ENCODE measurements at regions of chr22 and their contacts with region 1.

Region 1: GRCh38 chr22:36286471-36287224 is 33.7 kb downstream of the APOL1 start:
- DNase-seq: peak; percentile 44 to 93
- H3K4me3 ChIP-seq: no peak overlapping the region
- H3K27ac ChIP-seq: peak overlapping the region; percentile 49; the same call in 1 of the 2 replicates
- H3K4me1 ChIP-seq: peaks cover 0 to 3% (median 0%) of the 10 kb centered on the region in 4 experiments; a peak in 3 of 7 replicates
- H3K27me3 ChIP-seq: no peaks in the 10 kb centered on the region
- CTCF ChIP-seq: peak; percentile 90 to 99 (median 98)
- EP300 ChIP-seq: 0 out of 3 replicates have a peak, but pooled peaks of 1 of the 2 experiments have one; percentile 32
- POLR2A ChIP-seq: 0 out of 3 replicates have a peak, but pooled peaks of 1 of the 2 experiments have one; percentile 18
- RAD21 ChIP-seq: peak; percentile 80 to 87

Region 2: GRCh38 chr22:36258701-36259614 is 27.7 kb before region 1 on chr22:
- CTCF ChIA-PET with region 1: interaction called, 21 read pairs
- POLR2A ChIA-PET with region 1: no interaction called
- DNase-seq: peak in 1 of 2 experiments; percentile 56
- H3K4me3 ChIP-seq: peak overlapping the region in 1 of 4 experiments; percentile 31; a peak in 1 of 8 replicates
- H3K27ac ChIP-seq: peak overlapping the region; percentile 47; the same call in 1 of the 2 replicates
- H3K4me1 ChIP-seq: peaks cover 7 to 14% (median 10%) of the 10 kb centered on the region in 4 experiments
- H3K27me3 ChIP-seq: no peaks in the 10 kb centered on the region
- CTCF ChIP-seq: no peak
- EP300 ChIP-seq: no peak
- POLR2A ChIP-seq: peak in 1 of 2 experiments; percentile 27; a peak in 1 of 3 replicates
- RAD21 ChIP-seq: no peak

Region 3: DNA sequence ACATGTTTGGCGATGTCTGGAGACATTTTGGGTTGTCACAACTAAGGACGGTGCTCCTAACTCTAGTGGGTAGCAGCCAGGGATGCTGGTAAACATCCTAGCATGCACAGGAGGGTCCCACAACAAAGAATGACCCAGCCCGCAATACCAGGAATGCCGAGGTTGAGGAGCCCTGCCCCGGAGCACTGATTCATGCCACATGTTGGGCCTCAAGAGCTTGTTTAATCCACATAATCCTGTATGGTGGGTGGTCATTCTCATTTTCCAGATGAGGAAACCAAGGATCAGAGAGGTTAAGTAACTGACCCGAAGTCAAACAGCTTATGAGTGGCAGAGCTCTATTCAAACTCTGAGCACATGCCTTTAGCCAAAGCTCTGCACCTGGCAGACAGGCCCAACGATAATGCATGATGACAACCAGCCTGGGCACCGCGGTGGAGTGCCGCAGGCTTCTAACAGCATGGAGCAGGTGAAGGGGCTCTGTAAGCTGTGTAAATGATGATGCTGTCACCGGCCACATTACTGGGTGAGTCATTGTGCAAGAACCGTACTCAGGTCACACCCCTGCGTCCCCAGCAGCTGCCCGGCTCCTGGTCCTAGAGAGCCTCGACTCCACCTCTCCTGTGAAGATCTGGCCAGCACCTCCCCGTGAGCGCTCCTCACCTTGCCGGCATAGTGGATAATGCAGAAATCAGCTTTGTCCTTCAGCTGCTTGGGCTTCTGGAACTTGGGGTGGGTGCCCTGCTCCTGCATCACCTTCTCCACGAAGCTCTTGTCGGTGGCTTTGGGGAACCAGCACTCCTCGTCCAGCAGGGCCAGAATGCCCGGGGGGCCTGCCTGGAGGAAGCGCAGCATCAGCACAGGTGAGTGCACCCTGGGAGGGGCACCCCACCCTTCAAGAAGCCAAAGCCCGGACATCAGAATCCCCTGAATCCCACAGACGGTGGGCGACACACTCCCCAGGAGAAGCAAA is 25.0 kb after region 1 on chr22:
- CTCF ChIA-PET with region 1: interaction called, 159 read pairs
- POLR2A ChIA-PET with region 1: interaction called, 4 read pairs
- DNase-seq: no peak
- H3K4me3 ChIP-seq: no peak overlapping the region
- H3K27ac ChIP-seq: no peak overlapping the region
- H3K4me1 ChIP-seq: no peaks in the 10 kb centered on the region
- H3K27me3 ChIP-seq: no peaks in the 10 kb centered on the region
- CTCF ChIP-seq: no peak
- EP300 ChIP-seq: no peak
- POLR2A ChIP-seq: no peak
- RAD21 ChIP-seq: no peak

Region 4: GRCh38 chr22:36365020-36365411 is 78.4 kb after region 1 on chr22:
- CTCF ChIA-PET with region 1: no interaction called
- POLR2A ChIA-PET with region 1: no interaction called
- DNase-seq: no peak
- H3K4me3 ChIP-seq: no peak overlapping the region
- H3K27ac ChIP-seq: 0 out of 2 replicates have a peak overlapping the region, but pooled peaks have one; percentile 21
- H3K4me1 ChIP-seq: peaks cover 48 to 71% (median 61%) of the 10 kb centered on the region in 4 experiments
- H3K27me3 ChIP-seq: no peaks in the 10 kb centered on the region
- CTCF ChIP-seq: no peak
- EP300 ChIP-seq: no peak
- POLR2A ChIP-seq: no peak
- RAD21 ChIP-seq: no peak

Region 5: GRCh38 chr22:36486619-36487384 is 200.2 kb after region 1 on chr22:
- CTCF ChIA-PET with region 1: interaction called, 10 read pairs
- POLR2A ChIA-PET with region 1: interaction called, 4 read pairs
- DNase-seq: peak in 1 of 2 experiments; percentile 85
- H3K4me3 ChIP-seq: no peak overlapping the region
- H3K27ac ChIP-seq: no peak overlapping the region
- H3K4me1 ChIP-seq: no peaks in the 10 kb centered on the region; a peak in 1 of 7 replicates
- H3K27me3 ChIP-seq: peaks cover 0 to 7% (median 5%) of the 10 kb centered on the region in 4 experiments; a peak in 5 of 7 replicates
- CTCF ChIP-seq: peak; percentile 70 to 86 (median 83)
- EP300 ChIP-seq: no peak
- POLR2A ChIP-seq: no peak
- RAD21 ChIP-seq: peak; percentile 83 to 91

Measured in H1 (cell line).